ENCODE measurements at regions of chr16 and their contacts with region 1.

Region 1: GRCh38 chr16:21708533-21709115 is 44.9 kb downstream of the OTOA start:
- DNase-seq: peak; percentile 92
- ATAC-seq: peak; percentile 66
- H3K4me3 Mint-ChIP-seq: no peak overlapping the region
- H3K27ac Mint-ChIP-seq: no peak overlapping the region
- H3K4me1 Mint-ChIP-seq: no peaks in the 10 kb centered on the region
- H3K27me3 Mint-ChIP-seq: no peaks in the 10 kb centered on the region

Region 2: GRCh38 chr16:21584817-21585216 is 123.8 kb before region 1 on chr16:
- CTCF ChIA-PET with region 1: interaction called, 29 read pairs
- POLR2A ChIA-PET with region 1: no interaction called
- intact Hi-C with region 1: loop called (anchors 1 kb)
- DNase-seq: no peak
- ATAC-seq: no peak
- H3K4me3 Mint-ChIP-seq: no peak overlapping the region
- H3K27ac Mint-ChIP-seq: no peak overlapping the region
- H3K4me1 Mint-ChIP-seq: no peaks in the 10 kb centered on the region
- H3K27me3 Mint-ChIP-seq: no peaks in the 10 kb centered on the region

Region 3: DNA sequence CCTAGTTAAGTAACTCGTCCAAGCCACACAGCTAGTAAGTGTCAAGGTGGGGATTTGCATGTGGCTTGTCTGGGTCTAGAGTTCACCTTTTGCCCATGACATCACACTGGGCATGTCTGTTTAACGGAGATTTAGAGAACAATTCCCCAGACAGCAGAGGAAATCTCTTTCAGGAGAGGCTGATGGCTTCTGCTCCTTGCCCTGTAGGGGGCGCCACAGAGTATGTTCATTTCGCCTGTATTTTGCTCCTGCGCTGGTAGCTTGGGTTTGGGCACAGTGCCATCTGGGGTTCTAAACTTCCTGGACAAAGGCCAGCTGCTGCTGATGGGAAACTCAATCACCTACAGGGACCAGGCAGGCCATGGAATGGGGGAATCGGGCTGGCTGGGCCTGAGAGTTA is 24.4 kb before region 1 on chr16:
- CTCF ChIA-PET with region 1: interaction called, 22 read pairs
- POLR2A ChIA-PET with region 1: no interaction called
- intact Hi-C with region 1: no loop called
- DNase-seq: peak; percentile 70
- ATAC-seq: no peak
- H3K4me3 Mint-ChIP-seq: no peak overlapping the region
- H3K27ac Mint-ChIP-seq: no peak overlapping the region
- H3K4me1 Mint-ChIP-seq: no peaks in the 10 kb centered on the region
- H3K27me3 Mint-ChIP-seq: peaks cover 3% of the 10 kb centered on the region

Region 4: GRCh38 chr16:21698169-21699032 is 10.2 kb before region 1 on chr16:
- CTCF ChIA-PET with region 1: interaction called, 16 read pairs
- POLR2A ChIA-PET with region 1: no interaction called
- intact Hi-C with region 1: no loop called
- DNase-seq: no peak
- ATAC-seq: no peak
- H3K4me3 Mint-ChIP-seq: no peak overlapping the region
- H3K27ac Mint-ChIP-seq: no peak overlapping the region
- H3K4me1 Mint-ChIP-seq: no peaks in the 10 kb centered on the region
- H3K27me3 Mint-ChIP-seq: peaks cover 1% of the 10 kb centered on the region

Region 5: GRCh38 chr16:22948603-22949368 is 1240.2 kb after region 1 on chr16:
- CTCF ChIA-PET with region 1: no interaction called
- POLR2A ChIA-PET with region 1: no interaction called
- intact Hi-C with region 1: loop called in 1 of 2 experiments (anchors 5 kb)
- DNase-seq: peak; percentile 84
- ATAC-seq: peak; percentile 92
- H3K4me3 Mint-ChIP-seq: no peak overlapping the region
- H3K27ac Mint-ChIP-seq: no peak overlapping the region
- H3K4me1 Mint-ChIP-seq: peaks cover 6% of the 10 kb centered on the region
- H3K27me3 Mint-ChIP-seq: peaks cover 45% of the 10 kb centered on the region

Measured in activated CD4-positive, alpha-beta T cell treated with anti-CD3 and anti-CD28 coated beads for 36 hours (primary cell).